ENCODE measurements at regions of chr6 and their contacts with region 1.

Region 1: GRCh38 chr6:30717042-30717844 is at the start of gene MDC1:
- DNase-seq: peak; percentile 100
- H3K4me3 ChIP-seq: peak within 1 kb of the TSS; percentile 64 to 94 (median 84)
- H3K27ac ChIP-seq: peak within 1 kb of the TSS; percentile 86 to 94
- H3K4me1 ChIP-seq: peaks cover 17 to 48% (median 32%) of the 10 kb centered on the region in 4 experiments
- H3K27me3 ChIP-seq: no peaks in the 10 kb centered on the region

Region 2: DNA sequence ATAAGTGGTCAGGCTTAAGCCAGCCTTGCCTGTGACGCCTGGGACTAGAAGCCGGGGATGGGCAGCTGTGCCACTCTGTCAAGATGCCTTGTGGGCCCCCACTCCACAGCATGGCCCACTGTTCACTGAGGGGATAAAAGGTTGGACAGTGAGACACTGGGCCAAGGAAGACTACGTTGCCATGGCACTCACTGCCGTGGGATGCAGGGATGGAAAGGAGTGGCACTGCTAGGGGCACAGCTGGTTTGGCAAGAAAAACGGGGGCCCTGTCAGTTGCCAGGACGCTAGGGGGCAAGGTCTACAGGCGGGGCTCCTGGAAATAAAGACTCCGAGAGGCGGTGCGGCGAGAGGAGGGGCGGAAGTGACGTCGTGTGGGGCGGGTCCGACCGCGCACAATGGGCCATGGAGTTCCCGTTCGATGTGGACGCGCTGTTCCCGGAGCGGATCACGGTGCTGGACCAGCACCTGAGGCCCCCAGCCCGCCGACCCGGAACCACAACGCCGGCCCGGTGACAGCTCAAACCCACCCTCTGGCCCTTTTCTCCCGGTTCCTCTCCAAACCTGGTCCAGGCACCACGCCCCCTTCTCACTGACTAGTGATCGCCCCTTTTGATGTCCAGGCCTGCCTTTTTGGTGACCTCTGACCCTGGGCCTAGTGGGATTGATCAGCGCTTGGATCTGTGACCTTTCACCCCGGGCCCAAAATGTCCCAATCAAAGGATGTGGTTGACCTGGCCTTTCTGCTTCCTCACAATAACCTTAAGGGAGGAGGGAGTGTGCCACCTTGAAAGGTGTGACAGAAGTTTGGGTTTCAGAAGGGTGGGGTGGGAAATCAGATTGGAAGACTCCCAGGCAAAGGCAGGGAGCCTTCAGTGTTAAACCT is 90.5 kb before region 1 on chr6 and contains the start of gene ATAT1:
- CTCF ChIA-PET with region 1: interaction called, 11 read pairs
- POLR2A ChIA-PET with region 1: no interaction called
- DNase-seq: peak; percentile 89 to 92 (median 91)
- H3K4me3 ChIP-seq: peak within 1 kb of the TSS; percentile 62 to 95 (median 78)
- H3K27ac ChIP-seq: peak within 1 kb of the TSS; percentile 86 to 87
- H3K4me1 ChIP-seq: peaks cover 4 to 15% (median 14%) of the 10 kb centered on the region in 4 experiments
- H3K27me3 ChIP-seq: no peaks in the 10 kb centered on the region

Region 3: GRCh38 chr6:30654798-30655742 is 62.2 kb before region 1 on chr6:
- CTCF ChIA-PET with region 1: no interaction called
- POLR2A ChIA-PET with region 1: no interaction called
- DNase-seq: no peak
- H3K4me3 ChIP-seq: no peak overlapping the region
- H3K27ac ChIP-seq: no peak overlapping the region
- H3K4me1 ChIP-seq: no peaks in the 10 kb centered on the region
- H3K27me3 ChIP-seq: no peaks in the 10 kb centered on the region

Region 4: GRCh38 chr6:30664994-30665767 is 52.1 kb before region 1 on chr6:
- CTCF ChIA-PET with region 1: interaction called, 622 read pairs
- POLR2A ChIA-PET with region 1: no interaction called
- DNase-seq: no peak
- H3K4me3 ChIP-seq: no peak overlapping the region
- H3K27ac ChIP-seq: no peak overlapping the region
- H3K4me1 ChIP-seq: no peaks in the 10 kb centered on the region
- H3K27me3 ChIP-seq: no peaks in the 10 kb centered on the region

Region 5: DNA sequence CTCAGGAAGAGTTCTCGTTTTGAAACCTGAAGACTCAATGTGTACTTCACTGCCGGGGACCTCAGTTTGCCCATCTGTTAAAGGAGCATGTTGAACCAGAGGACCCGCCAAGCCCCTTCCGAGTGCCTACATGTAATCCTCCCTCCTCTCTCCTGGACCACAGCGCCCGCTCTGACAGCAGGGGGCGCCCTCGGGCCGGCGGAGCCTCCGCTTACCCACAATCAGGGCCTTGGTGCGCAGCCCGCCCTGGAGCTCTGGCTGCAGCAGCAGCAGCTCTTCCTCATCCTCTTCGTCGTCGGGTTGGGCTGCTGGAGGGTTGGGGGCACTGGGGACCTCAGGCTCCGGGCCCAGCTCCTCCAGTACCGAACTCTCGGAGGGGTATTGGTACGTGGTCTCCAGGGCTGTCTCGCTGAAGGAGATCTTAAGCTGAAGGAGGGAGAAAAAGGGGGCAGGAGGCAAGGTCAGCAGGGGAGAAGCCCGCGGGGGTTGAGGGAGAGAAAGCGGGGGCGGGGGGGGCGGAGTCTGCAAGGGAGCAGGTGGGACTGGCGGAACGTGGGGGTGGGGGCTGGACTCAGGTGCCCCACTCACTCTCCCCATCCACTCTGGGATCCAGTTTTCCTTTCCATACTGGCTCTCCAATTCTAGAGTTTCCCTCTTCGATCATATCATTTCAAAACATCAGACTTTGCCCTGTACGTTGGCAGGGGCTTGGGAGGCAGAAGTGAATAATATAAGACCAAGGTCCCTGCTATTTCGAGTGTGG is 38.1 kb before region 1 on chr6:
- CTCF ChIA-PET with region 1: interaction called, 622 read pairs
- POLR2A ChIA-PET with region 1: interaction called, 56 read pairs
- DNase-seq: peak; percentile 83 to 91 (median 87)
- H3K4me3 ChIP-seq: peak overlapping the region in 4 of 7 experiments; percentile 9 to 88 (median 43)
- H3K27ac ChIP-seq: peak overlapping the region in 1 of 2 experiments; percentile 44
- H3K4me1 ChIP-seq: peaks cover 10 to 55% (median 51%) of the 10 kb centered on the region in 4 experiments
- H3K27me3 ChIP-seq: no peaks in the 10 kb centered on the region

Region 6: GRCh38 chr6:30730601-30731435 is 13.6 kb after region 1 on chr6:
- CTCF ChIA-PET with region 1: interaction called, 26 read pairs
- POLR2A ChIA-PET with region 1: interaction called, 3 read pairs
- DNase-seq: peak; percentile 79 to 86 (median 85)
- H3K4me3 ChIP-seq: peak overlapping the region in 3 of 7 experiments; percentile 31 to 42 (median 41)
- H3K27ac ChIP-seq: no peak overlapping the region
- H3K4me1 ChIP-seq: peaks cover 0 to 26% (median 14%) of the 10 kb centered on the region in 4 experiments
- H3K27me3 ChIP-seq: no peaks in the 10 kb centered on the region

Region 7: GRCh38 chr6:31293343-31293742 is 576.1 kb after region 1 on chr6:
- CTCF ChIA-PET with region 1: no interaction called
- POLR2A ChIA-PET with region 1: no interaction called
- DNase-seq: no peak
- H3K4me3 ChIP-seq: no peak overlapping the region
- H3K27ac ChIP-seq: no peak overlapping the region
- H3K4me1 ChIP-seq: no peaks in the 10 kb centered on the region
- H3K27me3 ChIP-seq: peaks cover 0 to 16% (median 6%) of the 10 kb centered on the region in 5 experiments